ENCODE measurements at regions of chr4 and their contacts with region 1.

Region 1: GRCh38 chr4:120843849-120844527 is 78.5 kb downstream of the PRDM5 start:
- DNase-seq: peak; percentile 39
- ATAC-seq: no peak
- H3K4me3 Mint-ChIP-seq: no peak overlapping the region
- H3K27ac Mint-ChIP-seq: no peak overlapping the region
- H3K4me1 Mint-ChIP-seq: peaks cover 20% of the 10 kb centered on the region
- H3K27me3 Mint-ChIP-seq: peaks cover 3% of the 10 kb centered on the region

Region 2: DNA sequence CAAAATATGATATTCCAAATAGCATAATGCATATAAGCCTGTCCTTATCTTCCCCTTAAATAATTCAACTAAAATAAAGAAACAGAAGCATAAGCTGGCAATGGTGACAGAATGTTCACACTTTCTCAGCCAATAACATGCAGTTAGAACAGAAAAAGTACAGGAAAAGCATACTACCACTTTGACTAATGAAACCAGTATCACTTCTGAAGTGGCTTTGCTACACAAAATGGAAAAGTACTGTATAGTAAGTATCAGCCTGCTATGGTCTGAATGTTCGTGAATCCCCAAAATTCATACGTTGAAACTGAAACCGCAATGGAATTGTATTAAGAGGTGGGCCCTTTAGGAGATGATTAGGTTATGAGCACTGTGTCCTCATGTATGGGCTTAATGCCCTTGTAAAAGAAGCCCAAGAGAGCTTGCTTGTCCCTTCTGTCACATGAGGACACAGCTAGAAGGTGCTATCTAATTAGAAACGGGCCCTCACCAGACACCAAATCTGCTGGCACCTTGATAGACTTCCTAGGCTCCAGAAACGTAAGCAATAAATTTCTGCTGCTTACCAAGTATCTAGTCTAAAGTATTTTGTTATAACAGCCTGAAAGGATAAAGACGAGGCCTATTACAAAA is 24.1 kb before region 1 on chr4:
- CTCF ChIA-PET with region 1: interaction called, 4 read pairs
- POLR2A ChIA-PET with region 1: no interaction called
- intact Hi-C with region 1: loop called in 1 of 2 experiments (anchors 1 kb)
- DNase-seq: no peak
- ATAC-seq: peak; percentile 88
- H3K4me3 Mint-ChIP-seq: no peak overlapping the region
- H3K27ac Mint-ChIP-seq: no peak overlapping the region
- H3K4me1 Mint-ChIP-seq: peaks cover 5% of the 10 kb centered on the region
- H3K27me3 Mint-ChIP-seq: peaks cover 2% of the 10 kb centered on the region

Measured in activated CD4-positive, alpha-beta T cell treated with anti-CD3 and anti-CD28 coated beads for 36 hours (primary cell).